Adrenal gland (tissue), 19 donors: ENCODE measurements at regions of chr14 and their contacts with region 1.

Region 1: GRCh38 chr14:100383727-100384158 is 60.6 kb downstream of the SLC25A47 start:
- DNase-seq: peak; percentile 64 to 88 (median 79)
- H3K4me3 ChIP-seq: no peak overlapping the region
- H3K27ac ChIP-seq: peak overlapping the region in 1 of 5 donors; percentile 70
- H3K4me1 ChIP-seq: peaks cover 0 to 22% of the 10 kb centered on the region in 2 donors
- H3K27me3 ChIP-seq: no peaks in the 10 kb centered on the region
- CTCF ChIP-seq: peak; percentile 75 to 89 (median 84)
- POLR2A ChIP-seq: no peak

Region 2: DNA sequence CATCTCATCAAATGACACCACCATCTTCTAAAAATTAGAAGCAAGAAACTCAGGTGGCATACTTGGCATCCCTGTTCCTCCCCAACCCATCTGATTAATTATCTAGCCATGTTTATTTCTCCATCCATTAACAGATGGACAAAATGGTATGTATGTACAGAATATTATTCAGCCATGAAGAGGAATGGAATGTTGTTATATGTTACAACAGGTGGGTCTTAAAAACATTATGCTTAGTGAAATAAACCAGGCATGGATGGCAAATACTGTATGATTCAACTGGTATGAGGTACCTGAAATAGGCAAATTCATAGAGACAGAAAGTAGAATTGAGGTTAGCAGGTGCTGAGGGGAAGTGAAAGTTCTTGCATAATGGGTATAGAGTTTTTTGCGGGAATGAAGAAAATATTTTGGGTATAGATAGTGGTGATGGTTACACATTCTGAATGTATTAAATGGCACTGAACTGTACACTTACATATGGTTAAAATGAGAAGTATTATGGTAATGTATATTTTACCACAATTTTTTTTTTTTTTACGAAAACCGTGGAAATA is 127.3 kb before region 1 on chr14:
- intact Hi-C with region 1: no loop called
- DNase-seq: no peak
- H3K4me3 ChIP-seq: no peak overlapping the region
- H3K27ac ChIP-seq: no peak overlapping the region
- H3K4me1 ChIP-seq: peaks cover 9 to 38% of the 10 kb centered on the region in 2 donors
- H3K27me3 ChIP-seq: no peaks in the 10 kb centered on the region
- CTCF ChIP-seq: no peak
- POLR2A ChIP-seq: no peak

Region 3: DNA sequence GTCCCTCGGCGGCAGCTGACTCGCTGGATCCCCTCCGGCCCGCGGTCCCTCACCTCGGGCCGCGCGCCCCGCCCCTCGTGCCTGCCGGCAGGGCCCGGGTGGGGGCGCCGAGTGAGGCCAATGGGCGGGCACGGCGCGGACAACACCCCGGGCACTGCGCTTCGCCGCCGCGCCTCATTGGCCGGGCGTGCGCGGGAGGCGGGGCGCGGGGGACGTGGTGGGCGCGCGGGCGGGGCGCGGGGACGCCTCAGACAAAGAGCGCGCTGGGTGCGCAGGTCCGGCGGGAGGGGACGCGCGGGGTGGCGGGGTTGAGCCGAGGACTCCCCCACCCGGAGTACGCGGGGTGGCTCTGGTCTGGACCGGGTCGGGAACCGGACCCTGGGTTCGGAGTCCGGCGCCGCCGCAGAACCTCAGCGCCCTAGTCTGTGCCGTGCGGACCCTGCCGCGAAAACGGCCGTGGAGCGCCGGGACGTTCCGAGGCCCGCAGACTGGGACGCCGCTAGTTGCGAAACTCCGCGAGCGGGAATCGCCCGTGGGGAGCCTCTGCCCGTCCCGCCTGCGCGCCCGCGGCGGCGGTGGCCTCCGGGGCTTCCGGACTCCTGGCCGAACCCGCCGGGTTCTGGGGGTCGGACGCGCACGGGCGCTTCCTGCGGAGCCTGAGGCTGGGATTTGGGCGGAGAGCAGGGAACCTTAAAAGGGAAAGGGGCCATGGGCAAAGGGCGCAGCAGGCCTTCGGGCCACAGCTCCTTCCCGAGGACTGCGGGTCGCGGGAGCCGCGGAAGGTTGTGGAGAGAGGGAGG is 77.1 kb before region 1 on chr14 and contains the start of gene SLC25A29:
- intact Hi-C with region 1: loop called (anchors 5 to 10 kb)
- DNase-seq: peak; percentile 84 to 94 (median 89)
- H3K4me3 ChIP-seq: peak within 1 kb of the TSS; percentile 40 to 91 (median 82)
- H3K27ac ChIP-seq: peak within 1 kb of the TSS; percentile 65 to 92 (median 90)
- H3K4me1 ChIP-seq: peaks cover 26 to 37% of the 10 kb centered on the region in 2 donors
- H3K27me3 ChIP-seq: no peaks in the 10 kb centered on the region
- CTCF ChIP-seq: no peak
- POLR2A ChIP-seq: peak; percentile 47 to 92
- total RNA-seq, gene SLC25A29: 31.2 to 118 (median 86.4) TPM

Region 4: GRCh38 chr14:100640471-100641273 is 256.9 kb after region 1 on chr14:
- intact Hi-C with region 1: no loop called
- DNase-seq: no peak
- H3K4me3 ChIP-seq: no peak overlapping the region
- H3K27ac ChIP-seq: no peak overlapping the region
- H3K4me1 ChIP-seq: no peaks in the 10 kb centered on the region
- H3K27me3 ChIP-seq: no peaks in the 10 kb centered on the region
- CTCF ChIP-seq: no peak
- POLR2A ChIP-seq: no peak

Region 5: GRCh38 chr14:100654814-100655740 is 271.3 kb after region 1 on chr14:
- intact Hi-C with region 1: loop called (anchors 5 kb)
- DNase-seq: peak in 4 of 7 donors; percentile 60 to 69 (median 66)
- H3K4me3 ChIP-seq: no peak overlapping the region
- H3K27ac ChIP-seq: no peak overlapping the region
- H3K4me1 ChIP-seq: peaks cover 2 to 5% of the 10 kb centered on the region in 2 donors
- H3K27me3 ChIP-seq: no peaks in the 10 kb centered on the region
- CTCF ChIP-seq: peak; percentile 54 to 87 (median 66)
- POLR2A ChIP-seq: no peak

Region 6: GRCh38 chr14:100900837-100901390 is 517.2 kb after region 1 on chr14:
- intact Hi-C with region 1: loop called in 1 of 2 experiments (anchors 10 kb)
- DNase-seq: peak; percentile 79 to 91 (median 84)
- H3K4me3 ChIP-seq: peak overlapping the region in 1 of 4 donors; percentile 18
- H3K27ac ChIP-seq: peak overlapping the region; percentile 29 to 79 (median 56)
- H3K4me1 ChIP-seq: peaks cover 29 to 50% of the 10 kb centered on the region in 2 donors
- H3K27me3 ChIP-seq: no peaks in the 10 kb centered on the region
- CTCF ChIP-seq: peak; percentile 20 to 68 (median 52)
- POLR2A ChIP-seq: peak in 1 of 2 donors; percentile 26